ENCODE measurements at regions of chr6 and their contacts with region 1.

Region 1: DNA sequence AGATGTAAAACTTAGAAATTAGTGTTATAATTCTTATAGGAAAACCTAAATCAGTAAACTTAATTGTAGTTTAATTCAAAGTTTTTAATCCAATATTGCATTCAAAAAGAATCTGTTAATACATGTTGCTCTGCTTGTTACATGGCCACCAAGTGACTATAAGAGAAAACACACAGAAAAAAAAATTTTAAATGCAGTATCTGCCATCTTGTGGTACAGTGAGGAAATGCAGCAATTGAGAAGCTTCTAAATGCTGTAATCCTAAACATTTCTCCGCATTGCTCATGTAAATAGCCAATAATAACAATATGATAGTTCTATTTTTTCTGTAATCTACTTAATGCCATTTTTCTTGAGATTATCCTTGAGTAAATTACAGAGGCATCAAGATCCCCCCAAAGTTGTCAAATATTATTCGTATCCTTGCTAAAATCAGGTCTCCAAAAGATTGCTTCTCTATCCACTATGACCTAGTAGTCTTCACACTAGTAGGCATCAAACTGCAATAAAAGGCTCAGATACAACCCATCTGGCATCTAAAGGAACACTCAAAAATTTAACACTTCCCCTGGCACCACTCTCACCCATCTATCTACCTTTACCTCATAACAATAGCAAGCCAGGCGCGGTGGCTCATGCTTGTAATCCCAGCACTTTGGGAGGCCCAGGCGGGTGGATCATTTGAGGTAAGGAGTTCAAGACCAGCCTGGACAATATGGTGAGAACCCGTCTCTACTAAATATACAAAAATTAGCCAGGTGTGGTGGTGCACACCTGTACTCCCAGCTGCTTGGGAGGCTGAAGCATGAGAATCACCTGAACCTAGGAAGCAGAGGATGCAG is 34.6 kb downstream of the HDAC2 start:
- DNase-seq: peak; percentile 37
- CTCF ChIP-seq: peak; percentile 69

Region 2: GRCh38 chr6:112180095-112180820 is 1756.1 kb before region 1 on chr6:
- CTCF ChIA-PET with region 1: interaction called, 11 read pairs
- POLR2A ChIA-PET with region 1: no interaction called
- DNase-seq: peak; percentile 58
- CTCF ChIP-seq: peak; percentile 61

Region 3: GRCh38 chr6:113920663-113921267 is 15.5 kb before region 1 on chr6:
- CTCF ChIA-PET with region 1: interaction called, 17 read pairs
- POLR2A ChIA-PET with region 1: no interaction called
- DNase-seq: no peak
- CTCF ChIP-seq: no peak

Region 4: GRCh38 chr6:113953346-113953745 is 17.0 kb after region 1 on chr6:
- CTCF ChIA-PET with region 1: interaction called, 30 read pairs
- POLR2A ChIA-PET with region 1: interaction called, 3 read pairs
- DNase-seq: no peak
- CTCF ChIP-seq: no peak

Region 5: DNA sequence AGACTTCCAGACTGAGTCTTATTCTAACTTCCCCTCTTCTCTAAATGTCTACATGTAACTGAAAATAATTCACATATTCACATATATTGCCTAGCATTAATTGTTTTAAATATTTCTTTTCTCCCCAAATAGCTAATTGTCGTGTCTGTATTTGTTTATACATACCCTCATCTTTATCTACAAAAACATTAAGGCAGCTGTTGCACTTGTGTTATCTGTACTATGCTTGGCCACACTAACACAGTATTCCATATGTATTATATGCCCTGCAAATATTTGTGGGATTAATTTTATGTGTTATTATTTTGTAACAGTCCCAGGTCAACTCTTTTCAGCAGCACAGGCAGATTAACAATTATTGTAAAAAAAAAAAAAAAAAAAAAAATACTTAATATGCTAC is 22.9 kb after region 1 on chr6:
- CTCF ChIA-PET with region 1: interaction called, 30 read pairs
- POLR2A ChIA-PET with region 1: no interaction called
- DNase-seq: no peak
- CTCF ChIP-seq: no peak

Region 6: GRCh38 chr6:114169763-114170162 is 233.4 kb after region 1 on chr6:
- CTCF ChIA-PET with region 1: no interaction called
- POLR2A ChIA-PET with region 1: no interaction called
- DNase-seq: no peak
- CTCF ChIP-seq: no peak

Measured in GM10248 (cell line).